ENCODE measurements at regions of chr3 and their contacts with region 1.

Region 1: GRCh38 chr3:11271986-11272904 is at the start of gene ATG7:
- DNase-seq: peak; percentile 99
- ATAC-seq: peak; percentile 99
- H3K4me3 ChIP-seq: peak within 1 kb of the TSS; percentile 90
- H3K27ac ChIP-seq: peak within 1 kb of the TSS; percentile 73
- H3K4me1 ChIP-seq: peaks cover 9 to 28% of the 10 kb centered on the region in 2 experiments; a peak in 4 of 5 replicates
- H3K27me3 ChIP-seq: no peaks in the 10 kb centered on the region
- CTCF ChIP-seq: no peak
- EP300 ChIP-seq: no peak
- POLR2A ChIP-seq: peak; percentile 97
- RAD21 ChIP-seq: no peak
- polyA plus RNA-seq, gene ATG7: 18.3 to 33.6 TPM

Region 2: DNA sequence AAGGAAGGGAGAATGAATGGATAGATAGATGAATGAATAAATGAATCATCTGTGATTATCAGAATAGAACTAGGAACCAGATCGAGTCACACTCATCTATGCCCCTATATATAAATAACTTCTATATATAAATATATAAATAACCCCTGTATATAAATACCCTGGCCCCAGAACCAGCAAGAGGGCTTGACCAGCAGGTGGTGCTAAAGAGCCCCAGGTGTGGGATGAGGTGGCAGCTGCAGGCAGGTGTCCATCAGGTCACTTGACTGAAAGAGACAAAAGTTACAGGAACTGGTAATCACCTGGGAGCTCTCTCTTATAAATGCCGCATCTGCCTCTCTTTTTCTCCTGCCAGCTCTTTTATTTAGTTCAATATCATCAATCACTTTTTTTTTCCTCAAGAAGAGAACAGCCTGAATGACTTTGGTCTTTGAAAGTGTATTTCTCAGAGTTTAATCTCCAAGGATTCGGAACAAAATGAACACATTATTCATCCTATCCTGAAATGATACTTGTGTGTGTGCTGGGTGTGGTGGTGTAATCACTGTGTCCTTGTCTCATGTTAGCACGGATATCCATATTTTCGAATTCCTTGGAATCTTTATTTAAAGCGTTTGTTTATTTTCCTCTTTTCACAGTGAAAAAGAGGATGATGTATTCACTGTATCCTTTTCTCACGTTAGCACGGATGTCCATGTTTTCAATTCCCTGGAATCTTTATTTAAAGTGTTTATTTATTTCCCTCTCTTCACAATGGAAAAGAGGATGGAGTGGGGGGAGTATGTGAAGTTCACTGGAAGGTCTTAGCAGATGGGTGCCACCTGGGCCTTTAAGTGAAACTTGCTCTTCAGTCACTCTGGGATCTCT is 35.4 kb before region 1 on chr3:
- CTCF ChIA-PET with region 1: no interaction called
- POLR2A ChIA-PET with region 1: no interaction called
- in situ Hi-C with region 1: no loop called
- intact Hi-C with region 1: loop called (anchors 2 kb)
- DNase-seq: peak; percentile 70 to 79 (median 76)
- ATAC-seq: peak; percentile 96
- H3K4me3 ChIP-seq: no peak overlapping the region
- H3K27ac ChIP-seq: no peak overlapping the region
- H3K4me1 ChIP-seq: no peaks in the 10 kb centered on the region
- H3K27me3 ChIP-seq: peaks cover 13% of the 10 kb centered on the region in 2 experiments
- CTCF ChIP-seq: peak; percentile 82 to 93 (median 89)
- EP300 ChIP-seq: no peak
- POLR2A ChIP-seq: no peak
- RAD21 ChIP-seq: peak; percentile 76 to 83

Region 3: GRCh38 chr3:11282250-11283138 is 10.2 kb after region 1 on chr3:
- CTCF ChIA-PET with region 1: no interaction called
- POLR2A ChIA-PET with region 1: interaction called, 49 read pairs
- in situ Hi-C with region 1: no loop called
- intact Hi-C with region 1: no loop called
- DNase-seq: no peak
- ATAC-seq: no peak
- H3K4me3 ChIP-seq: no peak overlapping the region
- H3K27ac ChIP-seq: no peak overlapping the region
- H3K4me1 ChIP-seq: peaks cover 3 to 11% of the 10 kb centered on the region in 2 experiments; a peak in 4 of 5 replicates
- H3K27me3 ChIP-seq: no peaks in the 10 kb centered on the region
- CTCF ChIP-seq: no peak
- EP300 ChIP-seq: no peak
- POLR2A ChIP-seq: no peak
- RAD21 ChIP-seq: no peak

Region 4: DNA sequence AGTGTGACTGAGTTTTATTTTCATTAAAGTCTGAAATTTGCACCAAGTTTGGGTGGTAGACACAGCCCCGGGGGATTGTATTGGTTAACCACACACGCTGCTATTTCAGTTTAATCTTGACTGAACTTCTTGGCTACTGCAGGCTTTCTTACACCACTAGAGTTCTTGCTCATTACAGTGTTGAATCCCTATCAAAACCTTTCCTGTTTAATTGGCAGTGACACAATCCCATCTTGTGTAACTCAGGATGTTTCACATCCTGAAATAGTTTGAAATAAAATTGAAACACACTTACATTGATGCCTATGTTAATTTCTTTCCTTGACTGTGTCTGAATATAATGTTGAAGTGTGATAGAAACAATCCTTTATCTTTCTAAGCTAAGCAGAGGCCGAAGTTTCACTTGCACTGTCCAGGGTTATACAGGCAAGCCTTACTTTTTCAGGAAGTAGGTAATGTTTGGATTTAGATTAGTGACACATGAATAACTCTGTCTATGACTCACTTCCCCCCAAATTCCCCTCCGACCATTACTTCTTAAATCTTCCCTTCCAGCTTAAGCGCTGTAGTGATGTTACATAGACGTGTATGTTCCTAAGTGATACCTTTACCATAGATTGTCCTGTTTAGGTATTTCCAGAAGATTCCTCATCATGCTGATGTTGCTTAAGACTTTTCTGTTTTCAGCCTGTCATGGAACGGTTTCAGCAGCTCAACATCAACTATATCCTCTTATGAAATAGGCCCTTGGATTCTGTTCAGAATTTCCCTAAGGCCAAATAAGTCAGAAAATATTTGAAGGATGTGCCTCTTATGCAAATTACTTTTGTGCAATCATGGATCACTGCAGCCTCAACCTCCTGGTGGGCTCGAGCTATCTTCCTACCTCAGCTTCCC is 16.8 kb after region 1 on chr3:
- CTCF ChIA-PET with region 1: no interaction called
- POLR2A ChIA-PET with region 1: interaction called, 49 read pairs
- in situ Hi-C with region 1: no loop called
- intact Hi-C with region 1: loop called (anchors 2 kb)
- DNase-seq: peak; percentile 32 to 81 (median 56)
- ATAC-seq: peak; percentile 83
- H3K4me3 ChIP-seq: no peak overlapping the region
- H3K27ac ChIP-seq: peak overlapping the region; percentile 89
- H3K4me1 ChIP-seq: peaks cover 17 to 55% of the 10 kb centered on the region in 2 experiments
- H3K27me3 ChIP-seq: no peaks in the 10 kb centered on the region
- CTCF ChIP-seq: no peak
- EP300 ChIP-seq: peak; percentile 82
- POLR2A ChIP-seq: peak; percentile 35; the same call in 1 of the 2 replicates
- RAD21 ChIP-seq: no peak

Measured in K562 (cell line).